Gastrocnemius medialis (tissue), 4 donors: ENCODE measurements at regions of chr5 and their contacts with region 1.

Region 1: GRCh38 chr5:142699184-142699720 is 13.4 kb upstream of the FGF1 start:
- DNase-seq: peak; percentile 66 to 82
- ATAC-seq: peak; percentile 79 to 89
- H3K4me3 ChIP-seq: no peak overlapping the region
- H3K27ac ChIP-seq: peak overlapping the region; percentile 62 to 84 (median 75)
- H3K4me1 ChIP-seq: peaks cover 33 to 34% of the 10 kb centered on the region in 2 donors
- H3K27me3 ChIP-seq: no peaks in the 10 kb centered on the region
- CTCF ChIP-seq: peak; percentile 93 to 97 (median 96)
- POLR2A ChIP-seq: no peak

Region 2: GRCh38 chr5:141992349-141992963 is 706.8 kb before region 1 on chr5:
- in situ Hi-C with region 1: no loop called
- intact Hi-C with region 1: loop called (anchors 5 kb)
- DNase-seq: peak; percentile 36 to 65
- ATAC-seq: peak; percentile 83 to 86
- H3K4me3 ChIP-seq: no peak overlapping the region
- H3K27ac ChIP-seq: peak overlapping the region in 1 of 4 donors; percentile 18
- H3K4me1 ChIP-seq: peaks cover 0 to 5% of the 10 kb centered on the region in 2 donors
- H3K27me3 ChIP-seq: no peaks in the 10 kb centered on the region
- CTCF ChIP-seq: peak; percentile 58 to 84 (median 71)
- POLR2A ChIP-seq: no peak

Region 3: DNA sequence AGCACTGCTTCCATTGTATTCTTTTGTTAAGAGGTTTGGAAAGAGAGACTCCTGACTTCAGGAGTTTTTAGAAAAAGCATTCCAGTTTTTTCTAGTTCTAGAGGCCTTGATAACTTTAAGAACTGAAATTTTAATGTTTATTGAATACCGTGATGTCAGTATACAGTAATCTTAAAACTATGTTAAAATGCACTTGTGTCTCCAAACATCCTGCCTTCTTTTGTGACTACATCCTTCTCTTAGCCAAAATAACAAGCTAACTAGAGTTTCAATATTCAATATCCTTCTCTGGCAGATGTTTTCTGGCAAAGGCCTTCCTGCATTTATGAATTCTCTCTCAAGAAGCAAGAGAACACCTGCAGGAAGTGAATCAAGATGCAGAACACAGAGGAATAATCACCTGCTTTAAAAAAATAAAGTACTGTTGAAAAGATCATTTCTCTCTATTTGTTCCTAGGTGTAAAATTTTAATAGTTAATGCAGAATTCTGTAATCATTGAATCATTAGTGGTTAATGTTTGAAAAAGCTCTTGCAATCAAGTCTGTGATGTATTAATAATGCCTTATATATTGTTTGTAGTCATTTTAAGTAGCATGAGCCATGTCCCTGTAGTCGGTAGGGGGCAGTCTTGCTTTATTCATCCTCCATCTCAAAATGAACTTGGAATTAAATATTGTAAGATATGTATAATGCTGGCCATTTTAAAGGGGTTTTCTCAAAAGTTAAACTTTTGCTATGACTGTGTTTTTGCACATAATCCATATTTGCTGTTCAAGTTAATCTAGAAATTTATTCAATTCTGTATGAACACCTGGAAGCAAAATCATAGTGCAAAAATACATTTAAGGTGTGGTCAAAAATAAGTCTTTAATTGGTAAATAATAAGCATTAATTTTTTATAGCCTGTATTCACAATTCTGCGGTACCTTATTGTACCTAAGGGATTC is 547.5 kb before region 1 on chr5:
- in situ Hi-C with region 1: loop called in 1 of 4 experiments (anchors 25 kb)
- intact Hi-C with region 1: no loop called
- DNase-seq: no peak
- ATAC-seq: no peak
- H3K4me3 ChIP-seq: no peak overlapping the region
- H3K27ac ChIP-seq: no peak overlapping the region
- H3K4me1 ChIP-seq: no peaks in the 10 kb centered on the region
- H3K27me3 ChIP-seq: no peaks in the 10 kb centered on the region
- CTCF ChIP-seq: peak; percentile 59 to 85 (median 64)
- POLR2A ChIP-seq: no peak

Region 4: DNA sequence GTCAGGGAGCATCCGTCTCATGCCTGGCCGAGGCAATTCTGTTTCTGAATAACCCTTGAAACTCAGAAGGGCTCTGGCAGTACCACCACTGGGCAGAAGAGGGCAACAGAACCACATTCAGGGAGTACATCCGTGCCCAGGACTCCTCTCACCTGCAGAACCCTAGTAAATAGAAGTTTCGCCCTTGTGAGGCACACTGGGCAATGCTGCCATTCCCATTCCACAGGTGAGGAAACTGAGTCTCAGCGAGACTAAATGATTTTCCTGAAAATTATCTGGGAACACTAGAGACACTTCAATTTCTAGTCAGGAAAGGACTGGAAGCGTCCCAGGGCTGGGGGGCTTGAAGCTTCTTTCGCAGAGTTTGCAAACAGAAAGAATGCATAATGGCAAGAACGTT is 88.1 kb before region 1 on chr5:
- in situ Hi-C with region 1: no loop called
- intact Hi-C with region 1: loop called (anchors 1 kb)
- DNase-seq: peak; percentile 12 to 44
- ATAC-seq: peak; percentile 58 to 72
- H3K4me3 ChIP-seq: no peak overlapping the region
- H3K27ac ChIP-seq: no peak overlapping the region
- H3K4me1 ChIP-seq: peaks cover 0 to 3% of the 10 kb centered on the region in 2 donors
- H3K27me3 ChIP-seq: no peaks in the 10 kb centered on the region
- CTCF ChIP-seq: peak; percentile 51 to 86 (median 73)
- POLR2A ChIP-seq: no peak

Region 5: GRCh38 chr5:142655339-142656267 is 43.6 kb before region 1 on chr5:
- in situ Hi-C with region 1: loop called in 3 of 4 experiments (anchors 5 kb)
- intact Hi-C with region 1: loop called (anchors 1 kb)
- DNase-seq: peak; percentile 53 to 74
- ATAC-seq: peak; percentile 81 to 92
- H3K4me3 ChIP-seq: no peak overlapping the region
- H3K27ac ChIP-seq: peak overlapping the region in 3 of 4 donors; percentile 0 to 14 (median 1)
- H3K4me1 ChIP-seq: peaks cover 4 to 20% of the 10 kb centered on the region in 2 donors
- H3K27me3 ChIP-seq: no peaks in the 10 kb centered on the region
- CTCF ChIP-seq: peak; percentile 87 to 98 (median 94)
- POLR2A ChIP-seq: no peak